K562 (cell line): ENCODE measurements at regions of chr6 and their contacts with region 1.

Region 1: DNA sequence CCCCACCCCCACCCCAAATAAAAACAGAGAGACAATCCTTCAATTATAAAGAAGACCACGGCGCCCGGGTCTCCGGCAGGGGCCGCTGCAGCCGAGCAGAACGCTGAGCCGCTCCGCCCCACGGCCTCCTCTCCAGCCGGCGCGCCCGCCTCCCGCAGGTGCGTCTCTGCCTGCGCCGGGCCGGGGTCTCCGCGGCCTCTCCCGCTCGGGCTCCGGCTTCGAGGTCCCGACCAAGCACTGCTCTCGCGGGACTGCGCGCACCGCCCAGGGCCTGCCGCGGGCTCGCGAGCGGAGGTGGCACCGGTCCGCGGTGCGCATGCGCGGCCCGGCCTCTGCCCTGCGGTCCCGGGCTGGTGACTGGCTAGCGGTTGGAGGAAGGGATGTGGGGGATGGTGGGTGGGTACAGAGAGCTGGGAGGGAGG is 241 bp upstream of the SIRT5 start:
- DNase-seq: peak; percentile 97 to 99 (median 98)
- ATAC-seq: peak; percentile 90
- H3K4me3 ChIP-seq: peak overlapping the region; percentile 56
- H3K27ac ChIP-seq: peak overlapping the region; percentile 87
- H3K4me1 ChIP-seq: peaks cover 17 to 20% of the 10 kb centered on the region in 2 experiments
- H3K27me3 ChIP-seq: no peaks in the 10 kb centered on the region; a peak in 1 of 5 replicates
- CTCF ChIP-seq: peak; percentile 49 to 88 (median 74); a peak in 5 of 6 replicates
- EP300 ChIP-seq: no peak
- POLR2A ChIP-seq: no peak
- RAD21 ChIP-seq: peak; percentile 59 to 66

Region 2: GRCh38 chr6:12987783-12988182 is 586.4 kb before region 1 on chr6:
- CTCF ChIA-PET with region 1: no interaction called
- POLR2A ChIA-PET with region 1: no interaction called
- in situ Hi-C with region 1: no loop called
- intact Hi-C with region 1: no loop called
- DNase-seq: no peak
- ATAC-seq: no peak
- H3K4me3 ChIP-seq: no peak overlapping the region
- H3K27ac ChIP-seq: no peak overlapping the region
- H3K4me1 ChIP-seq: no peaks in the 10 kb centered on the region
- H3K27me3 ChIP-seq: peaks cover 5 to 9% of the 10 kb centered on the region in 2 experiments; a peak in 4 of 5 replicates
- CTCF ChIP-seq: no peak
- EP300 ChIP-seq: no peak
- POLR2A ChIP-seq: no peak
- RAD21 ChIP-seq: no peak

Region 3: GRCh38 chr6:13089296-13089994 is 484.7 kb before region 1 on chr6:
- CTCF ChIA-PET with region 1: no interaction called
- POLR2A ChIA-PET with region 1: no interaction called
- in situ Hi-C with region 1: no loop called
- intact Hi-C with region 1: no loop called
- DNase-seq: no peak
- ATAC-seq: no peak
- H3K4me3 ChIP-seq: no peak overlapping the region
- H3K27ac ChIP-seq: no peak overlapping the region
- H3K4me1 ChIP-seq: no peaks in the 10 kb centered on the region
- H3K27me3 ChIP-seq: peaks cover 0 to 13% of the 10 kb centered on the region in 2 experiments; a peak in 1 of 5 replicates
- CTCF ChIP-seq: no peak
- EP300 ChIP-seq: no peak
- POLR2A ChIP-seq: no peak
- RAD21 ChIP-seq: no peak

Region 4: GRCh38 chr6:13487122-13488014 is 86.8 kb before region 1 on chr6 and contains the start of gene GFOD1:
- CTCF ChIA-PET with region 1: no interaction called
- POLR2A ChIA-PET with region 1: no interaction called
- in situ Hi-C with region 1: no loop called
- intact Hi-C with region 1: loop called (anchors 5 kb)
- DNase-seq: peak; percentile 91 to 98 (median 97)
- ATAC-seq: peak; percentile 86
- H3K4me3 ChIP-seq: peak within 1 kb of the TSS; percentile 62
- H3K27ac ChIP-seq: peak within 1 kb of the TSS; percentile 68; the same call in 2 of the 3 replicates
- H3K4me1 ChIP-seq: peaks cover 21 to 31% of the 10 kb centered on the region in 2 experiments
- H3K27me3 ChIP-seq: no peaks in the 10 kb centered on the region; a peak in 1 of 5 replicates
- CTCF ChIP-seq: no peak
- EP300 ChIP-seq: no peak
- POLR2A ChIP-seq: peak; percentile 75
- RAD21 ChIP-seq: no peak; a peak in 1 of 4 replicates
- polyA plus RNA-seq, gene GFOD1: 5.4 to 5.9 TPM

Region 5: GRCh38 chr6:13702809-13703302 is 128.7 kb after region 1 on chr6:
- CTCF ChIA-PET with region 1: no interaction called
- POLR2A ChIA-PET with region 1: no interaction called
- in situ Hi-C with region 1: no loop called
- intact Hi-C with region 1: loop called (anchors 2 kb)
- DNase-seq: peak in 2 of 4 experiments; percentile 45 to 63
- ATAC-seq: peak; percentile 78
- H3K4me3 ChIP-seq: no peak overlapping the region
- H3K27ac ChIP-seq: peak overlapping the region; percentile 64
- H3K4me1 ChIP-seq: peaks cover 19 to 50% of the 10 kb centered on the region in 2 experiments; a peak in 4 of 5 replicates
- H3K27me3 ChIP-seq: no peaks in the 10 kb centered on the region
- CTCF ChIP-seq: no peak
- EP300 ChIP-seq: peak; percentile 52; the same call in 1 of the 2 replicates
- POLR2A ChIP-seq: no peak
- RAD21 ChIP-seq: 0 out of 4 replicates have a peak, but pooled peaks of 1 of the 2 experiments have one; percentile 2

Region 6: GRCh38 chr6:13767121-13767808 is 193.1 kb after region 1 on chr6:
- CTCF ChIA-PET with region 1: no interaction called
- POLR2A ChIA-PET with region 1: no interaction called
- in situ Hi-C with region 1: no loop called
- intact Hi-C with region 1: loop called (anchors 1 kb)
- DNase-seq: peak in 1 of 4 experiments; percentile 34
- ATAC-seq: peak; percentile 74
- H3K4me3 ChIP-seq: no peak overlapping the region
- H3K27ac ChIP-seq: no peak overlapping the region
- H3K4me1 ChIP-seq: peaks cover 2 to 9% of the 10 kb centered on the region in 2 experiments; a peak in 2 of 5 replicates
- H3K27me3 ChIP-seq: no peaks in the 10 kb centered on the region
- CTCF ChIP-seq: peak in 1 of 3 experiments; percentile 42; a peak in 3 of 6 replicates
- EP300 ChIP-seq: no peak
- POLR2A ChIP-seq: no peak
- RAD21 ChIP-seq: peak; percentile 20 to 58; a peak in 2 of 4 replicates

Region 7: GRCh38 chr6:14075095-14075503 is 500.9 kb after region 1 on chr6:
- CTCF ChIA-PET with region 1: no interaction called
- POLR2A ChIA-PET with region 1: no interaction called
- in situ Hi-C with region 1: no loop called
- intact Hi-C with region 1: loop called (anchors 10 kb)
- DNase-seq: no peak
- ATAC-seq: peak; percentile 60
- H3K4me3 ChIP-seq: no peak overlapping the region
- H3K27ac ChIP-seq: no peak overlapping the region
- H3K4me1 ChIP-seq: peaks cover 0 to 12% of the 10 kb centered on the region in 2 experiments; a peak in 3 of 5 replicates
- H3K27me3 ChIP-seq: no peaks in the 10 kb centered on the region
- CTCF ChIP-seq: no peak
- EP300 ChIP-seq: no peak
- POLR2A ChIP-seq: no peak
- RAD21 ChIP-seq: no peak